OCI-LY7 (cell line): ENCODE measurements at regions of chr1 and their contacts with region 1.

Region 1: DNA sequence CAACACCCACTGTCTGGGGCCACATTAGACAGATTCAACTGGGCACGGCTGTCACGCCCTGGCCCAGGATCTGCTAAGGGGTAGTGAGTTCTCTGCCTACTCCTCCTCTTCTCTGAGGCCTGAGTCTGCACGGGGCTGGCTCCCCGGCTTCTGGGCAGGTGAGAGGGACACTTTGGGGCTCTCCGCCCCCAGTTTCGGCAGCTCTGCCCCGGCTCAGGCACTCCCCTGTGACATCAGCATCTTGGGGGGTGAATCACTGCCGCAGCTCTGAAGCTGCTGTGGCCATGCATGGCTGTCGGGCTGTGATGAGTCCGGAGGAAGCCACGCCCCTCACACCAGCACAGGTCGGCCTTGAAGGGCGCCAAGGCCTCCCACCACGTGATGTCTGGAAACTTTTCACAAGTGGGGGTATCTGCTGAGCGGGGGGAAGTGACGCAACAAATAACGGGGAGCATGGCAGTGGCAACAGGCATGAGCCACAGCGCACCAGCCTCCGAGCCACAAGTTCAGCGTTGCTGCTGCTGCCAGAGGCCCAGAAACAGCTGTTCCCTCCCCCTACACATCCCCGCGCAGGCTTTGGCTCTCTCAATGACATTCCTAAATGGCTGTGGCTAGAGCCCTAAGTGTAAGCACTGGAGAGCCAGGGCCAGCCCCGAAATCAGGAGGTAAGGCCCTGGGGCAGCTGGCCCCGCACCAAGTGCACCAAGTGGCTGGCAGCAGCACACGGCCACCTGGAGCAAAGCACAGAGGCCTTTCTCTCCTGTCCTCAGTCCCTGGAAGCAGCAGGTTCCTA is 26.3 kb downstream of the ZBTB17 start:
- DNase-seq: peak; percentile 60
- H3K4me3 ChIP-seq: no peak overlapping the region
- H3K27ac ChIP-seq: no peak overlapping the region
- H3K4me1 ChIP-seq: peaks cover 42% of the 10 kb centered on the region
- CTCF ChIP-seq: no peak

Region 2: DNA sequence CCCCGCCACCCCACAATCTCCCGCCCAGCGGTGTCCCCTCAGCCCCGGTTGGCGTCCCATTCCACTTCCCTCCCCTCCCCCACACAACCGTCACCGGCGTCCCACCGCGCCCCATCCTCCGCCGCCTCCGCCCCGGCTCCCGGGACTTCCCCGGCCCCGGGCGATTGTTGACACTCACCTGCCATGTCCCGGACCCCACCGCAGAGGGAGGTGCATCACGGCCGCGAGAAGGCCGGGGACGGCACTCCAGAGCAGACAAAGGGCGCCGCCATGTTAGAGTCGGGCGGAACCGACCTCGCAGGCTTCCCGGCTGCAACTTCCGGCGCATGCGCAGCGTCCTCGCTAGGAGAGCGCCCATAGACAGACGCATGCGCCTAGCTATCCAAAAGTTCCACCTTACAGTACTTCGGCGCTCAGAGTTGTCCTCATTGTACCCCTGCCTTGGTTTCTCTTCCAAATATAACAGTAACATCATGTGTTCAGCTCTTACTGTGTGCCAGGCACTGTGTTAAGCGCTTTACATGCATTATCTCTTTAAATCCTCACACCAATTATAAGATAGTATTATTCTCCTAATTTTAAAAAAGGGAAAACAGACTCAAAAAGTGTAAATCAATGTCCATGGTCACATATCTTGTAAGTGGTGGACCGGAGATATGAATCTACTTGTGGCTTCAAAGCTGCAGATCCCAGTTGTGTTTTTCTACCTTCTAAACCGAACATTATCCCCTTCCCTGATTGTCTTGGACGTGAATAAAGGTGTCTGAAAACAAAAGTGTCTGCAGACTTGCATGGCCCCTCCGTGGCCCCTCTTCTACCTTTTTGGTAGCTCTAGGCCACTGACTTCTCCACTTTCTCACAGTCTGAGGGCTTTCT is 26.4 kb after region 1 on chr1 and contains the start of gene ZBTB17:
- CTCF ChIA-PET with region 1: interaction called, 8 read pairs
- POLR2A ChIA-PET with region 1: no interaction called
- intact Hi-C with region 1: loop called (anchors 2 kb)
- DNase-seq: peak; percentile 98
- H3K4me3 ChIP-seq: peak within 1 kb of the TSS; percentile 78
- H3K27ac ChIP-seq: peak within 1 kb of the TSS; percentile 83
- H3K4me1 ChIP-seq: peaks cover 31% of the 10 kb centered on the region
- CTCF ChIP-seq: peak; percentile 7; the same call in 1 of the 2 replicates
- total RNA-seq, gene ZBTB17: 32.1 and 53.4 TPM in 2 replicates

Region 3: DNA sequence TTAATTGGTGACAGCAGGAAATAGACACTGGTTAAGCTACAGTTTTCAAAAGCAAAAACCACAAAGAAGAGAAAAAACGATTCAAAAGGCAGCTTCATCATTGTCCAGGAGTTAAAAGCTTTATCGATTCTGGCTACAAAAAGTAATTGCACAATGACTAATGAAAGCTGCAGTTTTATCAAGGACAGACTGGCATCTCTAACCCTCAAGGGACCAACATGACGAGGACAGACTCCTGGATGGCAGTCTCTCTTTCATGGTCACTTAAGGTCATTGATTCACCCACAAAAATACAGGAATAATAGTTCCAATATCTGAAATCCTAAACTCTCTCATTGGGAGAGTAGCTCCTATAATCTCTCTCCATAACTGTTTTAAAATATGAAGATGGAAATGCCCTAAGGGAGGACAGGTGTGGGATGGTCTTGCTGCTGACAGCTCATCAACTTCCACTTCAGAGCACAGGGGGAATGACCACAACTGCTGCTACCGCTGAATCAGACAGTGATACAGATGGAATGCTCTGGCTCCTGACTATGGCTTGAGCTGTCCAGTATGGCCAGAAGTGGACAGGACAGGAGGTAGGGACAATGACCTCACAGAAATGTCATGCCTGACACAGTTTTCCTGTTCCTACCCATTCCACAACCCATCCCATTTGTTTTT is 304.7 kb after region 1 on chr1:
- CTCF ChIA-PET with region 1: no interaction called
- POLR2A ChIA-PET with region 1: no interaction called
- intact Hi-C with region 1: no loop called
- DNase-seq: no peak
- H3K4me3 ChIP-seq: no peak overlapping the region
- H3K27ac ChIP-seq: no peak overlapping the region
- H3K4me1 ChIP-seq: peaks cover 8% of the 10 kb centered on the region
- CTCF ChIP-seq: no peak